ENCODE measurements at regions of chr5 and their contacts with region 1.

Region 1: DNA sequence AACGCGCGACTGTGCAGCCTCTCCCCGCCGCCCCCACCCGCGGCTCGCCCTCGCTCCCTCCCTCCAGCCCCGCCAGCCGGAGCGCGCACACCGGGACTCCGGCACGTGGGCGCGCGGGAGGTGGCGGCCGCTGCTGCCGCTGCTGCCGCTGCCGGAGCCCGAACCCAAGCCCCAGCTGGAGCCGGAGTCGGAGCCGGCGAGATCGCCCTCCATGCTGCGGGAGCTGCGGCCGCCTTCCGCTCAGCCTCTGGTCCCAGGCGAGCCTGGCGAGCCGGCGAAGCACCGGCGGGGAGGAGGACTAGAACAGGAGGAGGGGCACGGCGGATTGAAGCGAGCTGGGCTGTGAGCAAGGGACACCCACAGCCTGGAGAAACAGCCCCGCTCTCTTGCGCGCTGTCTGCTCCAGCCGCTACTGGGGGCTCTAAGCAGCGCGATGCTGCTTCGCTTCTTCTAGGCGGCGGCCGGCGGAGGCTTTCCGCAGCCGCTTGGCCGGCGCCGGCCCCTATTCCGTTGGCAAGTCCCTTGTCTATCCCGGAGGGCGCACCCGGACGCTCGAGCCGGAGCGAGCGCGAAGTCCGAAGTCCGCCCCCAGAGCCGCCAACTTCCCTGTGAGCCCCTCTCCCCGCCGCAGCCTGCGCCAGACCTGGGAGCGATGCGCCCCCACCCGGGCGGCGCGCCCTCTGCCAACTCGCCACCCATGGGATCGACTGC is 598.7 kb upstream of the SGCD start:
- DNase-seq: peak; percentile 16
- ATAC-seq: peak; percentile 87
- H3K4me3 ChIP-seq: peak overlapping the region; percentile 37
- H3K27ac ChIP-seq: no peak overlapping the region
- H3K4me1 ChIP-seq: no peaks in the 10 kb centered on the region
- H3K27me3 ChIP-seq: peaks cover 27% of the 10 kb centered on the region
- CTCF ChIP-seq: no peak
- POLR2A ChIP-seq: no peak
- RAD21 ChIP-seq: no peak

Region 2: DNA sequence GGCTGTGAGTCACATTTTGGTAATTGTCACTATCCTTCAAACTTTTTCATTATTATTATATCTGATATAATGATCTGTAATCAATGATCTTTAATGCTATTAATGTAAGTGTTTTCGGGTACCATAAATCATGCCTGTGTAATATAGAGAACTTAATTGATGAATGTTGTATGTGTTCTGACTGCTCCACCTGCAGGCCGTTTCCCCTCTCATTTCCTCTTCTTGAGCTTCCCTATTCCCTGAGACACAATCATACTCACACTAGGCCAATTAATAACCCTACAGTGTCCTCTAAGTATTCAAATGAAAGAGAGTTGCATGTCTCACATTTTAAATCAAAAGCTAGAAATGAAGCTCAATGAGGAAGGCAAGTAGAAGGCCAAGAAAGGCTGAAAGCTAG is 177.7 kb after region 1 on chr5:
- CTCF ChIA-PET with region 1: no interaction called
- POLR2A ChIA-PET with region 1: no interaction called
- dilution Hi-C with region 1: no loop called
- in situ Hi-C with region 1: no loop called
- intact Hi-C with region 1: no loop called
- DNase-seq: no peak
- ATAC-seq: no peak
- H3K4me3 ChIP-seq: no peak overlapping the region
- H3K27ac ChIP-seq: no peak overlapping the region
- H3K4me1 ChIP-seq: no peaks in the 10 kb centered on the region
- H3K27me3 ChIP-seq: no peaks in the 10 kb centered on the region; the same call in 1 of the 2 replicates
- CTCF ChIP-seq: no peak
- POLR2A ChIP-seq: no peak
- RAD21 ChIP-seq: no peak

Region 3: GRCh38 chr5:156241266-156241665 is 513.0 kb after region 1 on chr5:
- CTCF ChIA-PET with region 1: no interaction called
- POLR2A ChIA-PET with region 1: no interaction called
- dilution Hi-C with region 1: no loop called
- in situ Hi-C with region 1: no loop called
- intact Hi-C with region 1: loop called (anchors 10 kb)
- DNase-seq: peak; percentile 26
- ATAC-seq: no peak
- H3K4me3 ChIP-seq: no peak overlapping the region
- H3K27ac ChIP-seq: no peak overlapping the region
- H3K4me1 ChIP-seq: no peaks in the 10 kb centered on the region
- H3K27me3 ChIP-seq: no peaks in the 10 kb centered on the region
- CTCF ChIP-seq: no peak
- POLR2A ChIP-seq: no peak
- RAD21 ChIP-seq: no peak

Region 4: GRCh38 chr5:156991714-156992113 is 1263.4 kb after region 1 on chr5:
- CTCF ChIA-PET with region 1: interaction called, 11 read pairs
- POLR2A ChIA-PET with region 1: no interaction called
- dilution Hi-C with region 1: no loop called
- in situ Hi-C with region 1: no loop called
- intact Hi-C with region 1: no loop called
- DNase-seq: no peak
- ATAC-seq: no peak
- H3K4me3 ChIP-seq: no peak overlapping the region
- H3K27ac ChIP-seq: no peak overlapping the region
- H3K4me1 ChIP-seq: no peaks in the 10 kb centered on the region
- H3K27me3 ChIP-seq: no peaks in the 10 kb centered on the region
- CTCF ChIP-seq: no peak
- POLR2A ChIP-seq: no peak
- RAD21 ChIP-seq: no peak